Breast epithelium (tissue), 4 donors: ENCODE measurements at regions of chr10 and their contacts with region 1.

Region 1: GRCh38 chr10:19003341-19003740 is 45.3 kb upstream of the MALRD1 start:
- DNase-seq: no peak
- H3K4me3 ChIP-seq: no peak overlapping the region
- H3K27ac ChIP-seq: no peak overlapping the region
- H3K4me1 ChIP-seq: no peaks in the 10 kb centered on the region
- H3K27me3 ChIP-seq: no peaks in the 10 kb centered on the region
- CTCF ChIP-seq: no peak
- POLR2A ChIP-seq: no peak

Region 2: DNA sequence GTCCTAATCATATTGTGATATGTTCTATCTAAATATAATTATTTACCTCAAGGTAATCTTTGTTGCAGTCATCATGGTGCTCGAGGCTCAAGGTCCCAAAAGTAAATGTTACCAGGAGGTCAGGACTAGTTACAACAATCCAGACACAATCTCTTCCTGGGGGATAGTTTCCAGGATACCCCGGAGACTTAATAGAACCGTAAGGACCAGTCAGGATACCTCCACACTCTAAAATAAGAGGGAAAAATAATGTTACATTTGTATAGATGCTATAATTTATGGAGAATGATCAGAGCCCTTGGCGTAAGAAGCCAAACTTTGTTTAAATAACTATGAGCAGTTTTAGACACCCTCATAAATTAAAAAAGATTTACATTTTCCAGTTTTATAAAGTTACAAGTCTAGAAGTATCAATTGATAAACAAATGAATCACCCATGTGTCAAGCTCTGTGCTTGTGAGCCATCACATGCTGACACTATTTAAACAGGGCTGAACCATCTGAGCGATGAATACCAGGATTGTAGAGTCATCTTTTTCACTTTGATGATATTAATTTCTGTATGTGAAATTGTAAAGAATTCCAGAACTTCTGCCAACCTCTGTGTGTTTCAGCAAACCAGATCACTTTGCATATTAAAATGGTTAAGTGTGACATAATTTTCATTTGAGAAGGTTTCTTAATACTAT is 1915.1 kb before region 1 on chr10:
- intact Hi-C with region 1: no loop called
- DNase-seq: no peak
- H3K4me3 ChIP-seq: no peak overlapping the region
- H3K27ac ChIP-seq: no peak overlapping the region
- H3K4me1 ChIP-seq: no peaks in the 10 kb centered on the region
- H3K27me3 ChIP-seq: no peaks in the 10 kb centered on the region
- CTCF ChIP-seq: no peak
- POLR2A ChIP-seq: no peak

Region 3: DNA sequence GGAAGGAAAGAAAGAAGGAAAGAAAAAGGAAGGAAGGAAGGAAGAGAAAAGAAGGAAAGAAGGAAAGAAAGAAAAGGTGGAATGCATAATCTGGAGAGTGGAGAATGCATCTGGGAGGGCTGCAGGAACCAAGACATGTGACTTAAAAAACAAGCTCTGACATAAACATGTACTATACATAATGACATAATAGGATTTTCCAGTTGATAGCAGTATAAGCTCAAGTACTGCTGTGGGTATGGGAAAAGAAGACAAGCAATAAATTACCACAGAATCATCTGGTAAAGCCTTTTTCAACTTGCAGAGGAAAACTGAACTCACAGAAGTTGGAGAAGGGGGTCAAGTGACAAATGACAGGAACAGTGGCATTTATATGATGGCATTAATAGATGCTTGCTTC is 1158.8 kb after region 1 on chr10:
- intact Hi-C with region 1: loop called (anchors 10 kb)
- DNase-seq: no peak
- H3K4me3 ChIP-seq: no peak overlapping the region
- H3K27ac ChIP-seq: no peak overlapping the region
- H3K4me1 ChIP-seq: no peaks in the 10 kb centered on the region
- H3K27me3 ChIP-seq: no peaks in the 10 kb centered on the region
- CTCF ChIP-seq: no peak
- POLR2A ChIP-seq: no peak